A673 (cell line): ENCODE measurements at regions of chr11 and their contacts with region 1.

Region 1: DNA sequence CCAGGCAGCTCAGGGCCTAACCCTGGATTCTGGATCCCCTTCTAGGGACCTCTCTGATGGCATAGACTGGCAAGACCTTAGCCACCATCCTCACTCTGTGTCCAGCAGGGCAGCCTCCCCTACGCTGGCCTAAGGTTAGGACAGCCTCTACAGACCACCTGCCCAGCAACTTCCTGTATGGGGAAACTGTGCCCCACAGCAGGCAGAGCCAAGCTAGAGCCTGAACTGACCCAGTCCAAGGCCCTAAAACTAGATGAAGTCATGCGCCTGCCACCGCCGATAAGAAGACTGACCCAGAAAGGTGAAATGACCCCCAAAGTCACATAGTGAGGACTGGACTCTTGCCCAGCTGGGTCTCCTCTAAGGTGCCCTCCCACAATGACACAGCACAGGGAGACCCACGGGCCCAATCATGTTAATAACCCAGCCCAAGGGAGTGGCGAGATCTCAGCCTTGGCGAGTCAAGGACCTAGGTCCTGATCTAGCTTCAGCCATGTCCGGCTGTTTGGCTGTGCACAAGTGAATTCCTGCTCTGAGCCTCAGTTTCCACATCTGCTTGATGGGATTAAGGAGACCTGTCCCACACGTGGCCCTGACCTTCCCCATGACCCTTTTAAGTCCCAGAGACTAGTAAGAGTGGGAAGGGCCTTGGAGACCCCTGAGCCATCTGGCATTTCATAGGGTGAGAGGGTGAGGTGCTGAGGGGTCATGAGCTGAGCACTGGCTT is 17.6 kb downstream of the STARD10 start:
- DNase-seq: no peak
- H3K4me3 ChIP-seq: no peak overlapping the region
- H3K27ac ChIP-seq: no peak overlapping the region
- H3K4me1 ChIP-seq: peaks cover 20% of the 10 kb centered on the region
- H3K27me3 ChIP-seq: no peaks in the 10 kb centered on the region
- CTCF ChIP-seq: no peak

Region 2: GRCh38 chr11:72730243-72730642 is 46.0 kb before region 1 on chr11:
- CTCF ChIA-PET with region 1: interaction called, 5 read pairs
- POLR2A ChIA-PET with region 1: interaction called, 10 read pairs
- intact Hi-C with region 1: no loop called
- DNase-seq: no peak
- H3K4me3 ChIP-seq: no peak overlapping the region
- H3K27ac ChIP-seq: no peak overlapping the region
- H3K4me1 ChIP-seq: no peaks in the 10 kb centered on the region
- H3K27me3 ChIP-seq: no peaks in the 10 kb centered on the region
- CTCF ChIP-seq: no peak

Region 3: GRCh38 chr11:72897506-72897905 is 121.2 kb after region 1 on chr11:
- CTCF ChIA-PET with region 1: no interaction called
- POLR2A ChIA-PET with region 1: no interaction called
- intact Hi-C with region 1: no loop called
- DNase-seq: no peak
- H3K4me3 ChIP-seq: no peak overlapping the region
- H3K27ac ChIP-seq: no peak overlapping the region
- H3K4me1 ChIP-seq: no peaks in the 10 kb centered on the region
- H3K27me3 ChIP-seq: no peaks in the 10 kb centered on the region
- CTCF ChIP-seq: no peak